OCI-LY7 (cell line): ENCODE measurements at regions of chrX and their contacts with region 1.

Region 1: GRCh38 chrX:43002526-43003203 is 224.7 kb upstream of the PPP1R2C start:
- DNase-seq: peak; percentile 50
- H3K4me3 ChIP-seq: no peak overlapping the region
- H3K27ac ChIP-seq: peak overlapping the region; percentile 73
- H3K4me1 ChIP-seq: peaks cover 31% of the 10 kb centered on the region
- CTCF ChIP-seq: no peak

Region 2: DNA sequence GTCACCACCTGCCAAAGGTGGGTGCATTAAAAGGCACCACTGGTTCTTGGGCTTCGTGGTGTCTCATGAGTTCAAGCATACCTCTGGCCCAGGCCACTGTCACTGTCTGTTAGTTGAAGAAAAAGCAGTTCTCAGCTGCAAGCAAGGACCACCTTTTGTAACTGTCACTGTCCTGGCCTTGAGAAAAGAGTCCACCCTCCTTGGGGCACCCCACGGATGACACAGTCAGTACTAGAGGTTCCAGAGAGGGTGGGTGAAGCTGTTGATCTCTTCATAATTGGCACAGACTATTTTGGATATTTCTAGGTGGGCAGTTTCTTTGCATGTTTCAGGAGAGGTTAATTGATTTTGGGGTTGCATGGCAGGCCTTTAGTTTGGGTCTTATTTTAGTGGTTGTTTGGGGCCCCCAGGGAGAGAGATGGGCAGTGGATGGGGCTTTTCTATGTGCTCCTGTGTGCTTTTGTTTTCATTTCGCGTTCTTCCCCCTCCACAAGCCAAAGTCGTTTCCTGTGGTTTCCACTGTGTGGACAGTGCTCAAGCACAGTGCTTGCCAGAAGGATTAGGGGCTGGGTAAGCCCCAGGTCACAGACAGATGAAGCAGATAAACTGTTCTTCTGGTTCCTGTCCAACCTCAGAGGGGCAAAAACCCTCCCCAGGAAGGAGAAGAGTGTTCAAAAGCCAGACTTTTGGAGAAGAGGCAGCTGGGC is 68.5 kb before region 1 on chrX:
- CTCF ChIA-PET with region 1: no interaction called
- POLR2A ChIA-PET with region 1: no interaction called
- intact Hi-C with region 1: no loop called
- DNase-seq: peak; percentile 58
- H3K4me3 ChIP-seq: no peak overlapping the region
- H3K27ac ChIP-seq: peak overlapping the region; percentile 56
- H3K4me1 ChIP-seq: peaks cover 18% of the 10 kb centered on the region
- CTCF ChIP-seq: no peak

Region 3: DNA sequence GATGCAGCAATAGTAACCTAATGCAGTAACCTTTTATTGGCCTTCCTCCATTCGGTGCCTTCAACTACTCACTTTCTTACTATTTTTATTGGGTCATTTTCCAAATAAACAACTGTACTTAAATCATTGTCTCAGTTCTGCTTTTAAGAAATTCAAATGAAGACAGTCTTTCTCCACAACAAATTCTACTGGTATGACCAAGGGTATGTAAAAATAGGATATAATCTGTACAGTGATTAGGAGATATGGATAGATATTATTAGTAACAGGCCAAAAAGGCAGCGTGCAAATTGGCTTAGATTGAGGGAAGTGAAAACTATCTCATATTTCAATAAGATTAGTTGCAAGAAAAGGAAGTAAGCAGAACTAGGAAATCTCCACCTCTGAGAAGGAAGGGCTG is 47.3 kb before region 1 on chrX:
- CTCF ChIA-PET with region 1: no interaction called
- POLR2A ChIA-PET with region 1: interaction called, 5 read pairs
- intact Hi-C with region 1: loop called (anchors 5 kb)
- DNase-seq: peak; percentile 69
- H3K4me3 ChIP-seq: peak overlapping the region; percentile 36
- H3K27ac ChIP-seq: peak overlapping the region; percentile 96
- H3K4me1 ChIP-seq: peaks cover 22% of the 10 kb centered on the region
- CTCF ChIP-seq: no peak